Activated T-helper 1 cell treated with anti-CD3 and anti-CD28 coated beads, Interleukin-12 subunit alpha, Interleukin-12 subunit beta, Interleukin-2, Interleukin-4 antibody, amounts not matched to agents 30 ng/mL and 10 ng/mL and 1 ng/mL, durations not matched to agents 14 hours and 24 hours and 36 hours (primary cell): ENCODE measurements at regions of chrX and their contacts with region 1.

Region 1: GRCh38 chrX:48801280-48802088 is at the start of gene HDAC6:
- DNase-seq: peak; percentile 94
- H3K4me3 Mint-ChIP-seq: peak within 1 kb of the TSS; percentile 91
- H3K27ac Mint-ChIP-seq: peak within 1 kb of the TSS; percentile 98
- H3K4me1 Mint-ChIP-seq: peaks cover 13% of the 10 kb centered on the region
- H3K27me3 Mint-ChIP-seq: no peaks in the 10 kb centered on the region
- total RNA-seq, gene HDAC6: 44.7 and 56.4 TPM in 2 replicates

Region 2: DNA sequence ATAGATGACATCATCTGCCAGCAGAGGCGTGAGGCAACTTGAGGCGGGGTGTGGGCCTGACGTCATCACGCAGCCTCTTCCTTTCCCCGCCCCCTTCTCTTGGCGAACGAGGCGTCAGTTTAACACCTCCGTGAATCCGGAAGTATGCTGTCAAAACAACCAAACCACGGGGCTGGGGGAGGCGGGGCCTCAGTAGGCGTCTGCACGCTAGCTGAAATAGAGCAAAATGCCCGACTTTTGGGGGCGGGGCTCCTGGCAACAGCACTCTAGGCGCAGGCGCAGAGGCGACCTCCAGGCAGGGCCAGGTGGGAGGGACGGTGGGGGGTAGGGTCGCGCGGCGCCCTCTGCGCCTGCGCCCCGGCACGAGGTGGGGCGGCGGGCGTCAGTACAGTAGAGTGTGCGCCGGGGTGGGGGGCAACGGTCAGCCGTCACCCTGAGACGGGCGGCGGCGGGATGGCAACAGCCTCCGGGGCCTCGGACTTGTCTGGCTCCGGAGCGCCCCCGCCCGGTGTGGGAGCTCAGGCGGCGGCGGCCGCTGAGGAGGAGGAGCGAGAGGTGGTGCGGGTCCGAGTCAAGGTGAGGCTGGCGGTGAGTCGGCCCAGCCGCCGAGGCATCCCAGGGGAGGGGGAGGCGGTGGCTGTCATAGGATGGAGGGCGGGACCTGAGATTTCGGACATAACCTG is 262.0 kb before region 1 on chrX and contains the start of gene TBC1D25:
- intact Hi-C with region 1: loop called (anchors 1 kb)
- DNase-seq: peak; percentile 93
- H3K4me3 Mint-ChIP-seq: peak within 1 kb of the TSS; percentile 94
- H3K27ac Mint-ChIP-seq: peak within 1 kb of the TSS; percentile 92
- H3K4me1 Mint-ChIP-seq: peaks cover 17% of the 10 kb centered on the region
- H3K27me3 Mint-ChIP-seq: no peaks in the 10 kb centered on the region
- total RNA-seq, gene TBC1D25: 13.5 and 16.0 TPM in 2 replicates

Region 3: GRCh38 chrX:48696301-48697181 is 104.9 kb before region 1 on chrX and contains the start of gene SUV39H1:
- intact Hi-C with region 1: loop called (anchors 1 kb)
- DNase-seq: peak; percentile 85
- H3K4me3 Mint-ChIP-seq: peak within 1 kb of the TSS; percentile 93
- H3K27ac Mint-ChIP-seq: peak within 1 kb of the TSS; percentile 91
- H3K4me1 Mint-ChIP-seq: peaks cover 35% of the 10 kb centered on the region
- H3K27me3 Mint-ChIP-seq: peaks cover 2% of the 10 kb centered on the region
- total RNA-seq, gene SUV39H1: 27.5 and 27.7 TPM in 2 replicates

Region 4: DNA sequence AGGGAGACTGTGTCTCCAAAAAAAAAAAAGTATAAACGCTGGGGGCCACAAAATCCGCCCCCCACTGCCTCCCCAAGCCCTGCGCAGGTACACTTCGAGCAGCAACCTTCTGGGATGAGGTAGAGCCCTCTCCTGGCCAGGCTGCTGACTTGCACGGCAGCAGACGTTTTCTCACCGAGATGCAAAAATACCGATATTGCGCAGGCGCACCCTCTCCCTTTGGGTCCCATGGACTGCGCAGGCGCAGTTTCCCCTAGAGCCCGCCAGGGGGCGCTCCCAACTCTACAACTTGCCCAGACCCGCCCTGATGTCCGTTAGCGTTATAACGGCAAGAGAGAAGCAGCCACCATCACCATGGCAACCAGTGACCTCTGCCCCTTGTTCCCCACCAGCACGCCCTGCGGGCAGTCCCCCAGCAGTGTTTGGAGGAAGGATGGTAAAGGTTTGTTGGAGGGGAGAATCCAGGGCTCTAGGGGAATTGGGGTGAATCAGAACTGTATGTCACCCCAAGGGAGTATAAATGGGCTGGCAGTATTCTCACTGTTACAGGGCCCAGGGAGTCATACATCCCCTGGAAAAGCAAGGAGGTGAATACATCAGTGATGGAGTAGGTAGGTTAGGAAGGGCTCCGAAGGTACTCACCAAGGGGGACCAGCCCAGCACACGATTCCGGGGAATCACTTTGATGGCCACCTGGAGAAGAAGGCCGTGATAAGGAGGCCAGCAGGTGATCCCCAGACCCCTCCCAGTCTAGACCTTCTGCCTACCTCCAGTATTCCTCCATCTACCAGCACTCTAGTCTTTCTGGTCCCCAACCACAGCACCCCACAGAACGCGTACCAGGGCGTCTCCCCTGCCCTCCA is 115.9 kb after region 1 on chrX:
- intact Hi-C with region 1: loop called (anchors 1 kb)
- DNase-seq: peak; percentile 87
- H3K4me3 Mint-ChIP-seq: peak overlapping the region; percentile 98
- H3K27ac Mint-ChIP-seq: peak overlapping the region; percentile 97
- H3K4me1 Mint-ChIP-seq: peaks cover 35% of the 10 kb centered on the region
- H3K27me3 Mint-ChIP-seq: no peaks in the 10 kb centered on the region

Region 5: DNA sequence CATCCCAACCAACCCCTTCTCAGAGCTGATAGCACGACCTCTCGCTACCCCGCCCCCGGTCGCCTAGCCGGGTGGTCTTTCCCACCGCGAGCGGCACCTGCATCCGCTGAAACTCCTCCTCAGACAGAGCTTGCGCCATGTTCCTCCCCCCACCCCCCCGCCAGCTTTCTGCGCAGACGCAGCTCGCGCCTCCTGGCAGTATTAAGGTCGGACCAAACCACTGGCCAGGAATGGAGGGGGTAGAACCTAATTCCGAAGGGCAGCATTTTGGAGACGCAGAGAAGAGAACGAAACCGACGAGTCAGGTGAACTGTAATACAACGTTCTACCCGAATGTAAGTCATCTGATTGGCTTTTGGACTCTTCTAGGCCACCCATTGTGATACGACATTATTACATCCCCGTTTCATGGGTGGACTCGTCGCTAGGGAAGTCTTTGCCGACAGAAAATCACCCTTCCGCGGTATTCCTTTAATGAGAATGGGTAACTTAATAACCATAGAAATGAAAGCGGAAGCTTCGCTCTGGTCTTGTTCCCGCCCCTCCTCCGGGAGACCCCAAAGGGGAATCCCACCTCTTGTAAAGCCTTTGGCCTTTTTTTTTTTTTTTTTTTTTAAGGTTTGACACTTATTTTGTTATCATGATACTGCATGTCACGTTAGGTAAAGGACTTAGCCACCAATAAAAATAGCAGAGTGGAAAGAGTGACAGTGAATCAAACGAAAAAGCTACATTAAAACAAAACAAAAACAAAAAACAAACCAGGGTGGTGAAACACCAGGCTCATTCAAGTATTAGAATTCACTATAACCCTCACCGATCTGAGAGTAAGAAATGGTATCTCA is 200.8 kb after region 1 on chrX and contains the start of gene GRIPAP1:
- intact Hi-C with region 1: loop called (anchors 1 kb)
- DNase-seq: peak; percentile 68
- H3K4me3 Mint-ChIP-seq: peak within 1 kb of the TSS; percentile 99
- H3K27ac Mint-ChIP-seq: peak within 1 kb of the TSS; percentile 96
- H3K4me1 Mint-ChIP-seq: peaks cover 35% of the 10 kb centered on the region
- H3K27me3 Mint-ChIP-seq: no peaks in the 10 kb centered on the region
- total RNA-seq, gene GRIPAP1: 85.8 and 89.2 TPM in 2 replicates

Region 6: GRCh38 chrX:49120099-49120498 is 318.6 kb after region 1 on chrX:
- intact Hi-C with region 1: loop called (anchors 1 kb)
- DNase-seq: no peak
- H3K4me3 Mint-ChIP-seq: peak overlapping the region; percentile 69
- H3K27ac Mint-ChIP-seq: peak overlapping the region; percentile 71
- H3K4me1 Mint-ChIP-seq: peaks cover 40% of the 10 kb centered on the region
- H3K27me3 Mint-ChIP-seq: no peaks in the 10 kb centered on the region

Region 7: DNA sequence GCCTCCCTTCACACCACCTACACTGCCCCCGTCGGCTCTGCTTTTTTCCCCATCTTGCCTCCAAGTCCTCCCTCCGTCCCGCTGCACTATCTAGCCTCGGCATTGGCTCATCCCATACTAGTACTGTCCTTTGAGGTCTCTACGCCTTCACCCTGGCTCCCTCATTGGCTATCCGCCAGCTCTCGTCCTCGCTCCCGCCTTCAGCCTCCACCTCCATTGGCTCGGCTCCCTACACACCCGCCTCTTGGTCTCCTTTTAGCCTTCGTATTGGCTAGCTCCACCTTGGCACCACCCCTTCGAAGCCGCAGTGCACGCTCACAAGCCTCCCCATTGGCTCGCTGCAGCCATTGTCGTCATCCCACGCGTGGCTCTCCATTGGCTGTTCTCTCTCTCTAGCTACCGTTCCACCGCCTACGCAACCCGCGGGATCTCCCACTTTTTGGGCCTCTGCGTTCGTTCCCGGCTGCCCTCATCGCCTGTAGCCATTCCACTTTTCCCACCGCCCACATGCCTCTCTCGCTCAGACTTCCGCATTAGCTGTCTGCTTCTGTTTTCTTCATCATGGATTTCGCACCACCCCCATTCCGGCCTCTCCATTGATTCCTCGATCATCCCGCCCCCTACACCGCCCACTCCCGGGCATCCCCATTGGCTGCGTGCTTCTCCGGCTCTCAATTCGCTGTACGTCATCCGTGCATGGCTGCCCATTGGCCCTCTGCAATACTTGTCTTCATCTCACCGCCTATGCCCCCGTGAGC is 467.7 kb after region 1 on chrX:
- intact Hi-C with region 1: loop called (anchors 5 kb)
- DNase-seq: peak; percentile 90
- H3K4me3 Mint-ChIP-seq: peak overlapping the region; percentile 91
- H3K27ac Mint-ChIP-seq: peak overlapping the region; percentile 99
- H3K4me1 Mint-ChIP-seq: peaks cover 60% of the 10 kb centered on the region
- H3K27me3 Mint-ChIP-seq: no peaks in the 10 kb centered on the region